ENCODE measurements at regions of chr2 and their contacts with region 1.

Region 1: DNA sequence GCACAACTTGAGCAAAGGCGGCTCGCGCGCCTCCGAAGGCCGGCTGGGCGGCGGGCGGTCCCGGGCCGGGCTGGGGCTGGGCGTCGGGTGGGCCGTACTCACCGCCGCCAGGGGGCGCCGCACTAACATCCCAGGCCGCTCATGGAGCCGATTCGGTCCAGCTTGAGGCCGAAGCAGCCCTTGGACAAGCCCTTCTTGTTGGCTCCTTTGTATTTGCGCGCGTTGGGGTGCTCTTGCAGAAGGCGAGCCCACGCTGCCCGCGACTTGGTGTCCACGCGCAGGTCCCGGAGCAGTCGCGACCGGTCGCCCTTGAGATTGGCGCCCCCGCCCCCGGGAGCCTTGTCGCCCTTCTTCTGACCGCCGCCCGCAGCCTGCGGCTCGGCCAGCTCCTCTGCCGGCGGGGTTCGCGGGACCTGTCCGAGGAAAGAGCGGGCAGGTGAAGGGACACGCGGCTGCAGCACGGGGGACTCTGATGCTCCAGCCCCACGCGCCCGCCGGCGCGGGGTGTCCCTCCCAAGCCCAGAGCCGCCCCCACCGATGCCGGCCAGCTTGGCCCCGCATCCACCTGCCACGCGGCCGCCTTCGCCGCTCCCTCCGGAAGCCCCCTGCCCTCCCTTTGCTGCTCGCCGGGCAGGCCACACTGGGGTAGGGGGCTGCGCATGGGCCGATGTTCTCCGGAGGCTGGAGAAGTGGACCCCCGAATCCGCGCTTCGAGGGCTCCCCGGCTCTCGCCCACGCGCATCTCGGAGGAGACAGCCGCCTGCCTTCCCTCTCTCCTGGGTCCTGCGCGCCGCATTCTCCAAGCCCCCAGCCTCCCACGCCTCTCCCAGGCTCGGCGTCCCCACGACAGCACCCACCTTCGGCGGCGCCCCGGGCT is 655 bp downstream of the NPPC start:
- DNase-seq: peak; percentile 61
- H3K4me3 ChIP-seq: peak overlapping the region; percentile 50
- H3K27ac ChIP-seq: no peak overlapping the region
- H3K27me3 ChIP-seq: peaks cover 72% of the 10 kb centered on the region
- CTCF ChIP-seq: peak; percentile 68

Region 2: DNA sequence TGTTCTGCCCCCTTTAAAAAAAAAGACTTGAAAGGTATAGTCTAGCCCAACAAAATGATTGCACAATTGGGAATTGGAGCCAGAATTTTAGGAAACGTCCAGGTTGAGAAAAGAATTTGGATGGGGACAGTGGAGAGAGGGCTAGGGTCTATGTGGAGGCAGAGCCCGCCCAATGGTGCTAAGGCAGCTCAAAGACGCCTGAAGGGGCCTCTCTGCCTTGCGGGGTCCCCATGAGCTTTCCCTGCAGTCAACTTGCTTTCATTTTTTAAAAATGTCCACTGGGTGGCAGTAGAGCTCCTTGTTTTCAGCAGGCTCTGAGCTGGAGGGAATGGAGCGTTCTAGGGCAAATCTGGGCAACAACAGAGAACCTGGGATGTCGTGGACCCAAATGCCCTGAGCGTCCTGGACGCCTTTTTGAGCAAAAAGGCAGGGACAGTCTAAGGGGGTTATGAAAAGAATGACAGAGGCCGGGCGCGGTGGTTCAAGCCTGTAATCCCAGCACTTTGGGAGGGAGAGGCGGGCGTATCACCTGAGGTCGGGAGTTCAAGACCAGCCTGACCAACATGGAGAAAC is 1101.0 kb before region 1 on chr2:
- CTCF ChIA-PET with region 1: interaction called, 12 read pairs
- POLR2A ChIA-PET with region 1: no interaction called
- DNase-seq: peak; percentile 70
- H3K4me3 ChIP-seq: peak overlapping the region; percentile 53
- H3K27ac ChIP-seq: no peak overlapping the region
- H3K27me3 ChIP-seq: peaks cover 19% of the 10 kb centered on the region
- CTCF ChIP-seq: peak; percentile 73

Region 3: DNA sequence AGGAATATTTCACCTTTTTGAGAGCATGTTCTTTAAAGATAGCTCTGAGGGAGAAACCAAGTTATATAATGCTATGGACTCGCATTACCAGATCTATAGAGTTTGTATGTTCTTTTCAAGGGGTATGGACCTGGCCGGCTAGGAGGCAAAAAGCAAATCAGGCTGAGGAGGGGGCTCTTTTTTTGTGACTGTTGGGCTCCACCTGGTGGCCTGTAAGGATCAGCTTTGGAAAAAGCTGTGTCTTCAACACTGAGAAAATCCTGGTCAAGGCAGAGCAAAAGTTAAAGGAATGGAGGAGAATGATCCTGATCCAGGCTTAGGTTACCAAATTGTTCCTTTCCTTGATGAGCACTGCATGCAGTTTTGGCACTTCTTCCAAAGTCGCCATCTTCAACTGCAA is 216.5 kb after region 1 on chr2:
- CTCF ChIA-PET with region 1: interaction called, 62 read pairs
- POLR2A ChIA-PET with region 1: no interaction called
- DNase-seq: no peak
- H3K4me3 ChIP-seq: no peak overlapping the region
- H3K27ac ChIP-seq: no peak overlapping the region
- H3K27me3 ChIP-seq: no peaks in the 10 kb centered on the region
- CTCF ChIP-seq: peak; percentile 75

Measured in AG04450 (cell line).